GM10248 (cell line): ENCODE measurements at regions of chr5 and their contacts with region 1.

Region 1: GRCh38 chr5:74510476-74511075 is 130.0 kb downstream of the ENC1 start:
- DNase-seq: no peak
- CTCF ChIP-seq: no peak

Region 2: GRCh38 chr5:74500110-74500917 is 10.3 kb before region 1 on chr5:
- CTCF ChIA-PET with region 1: interaction called, 13 read pairs
- POLR2A ChIA-PET with region 1: no interaction called
- DNase-seq: no peak
- CTCF ChIP-seq: no peak

Region 3: GRCh38 chr5:74673011-74673790 is 162.6 kb after region 1 on chr5:
- CTCF ChIA-PET with region 1: no interaction called
- POLR2A ChIA-PET with region 1: no interaction called
- DNase-seq: no peak
- CTCF ChIP-seq: peak; percentile 13